MCF 10A (cell line): ENCODE measurements at regions of chr7 and their contacts with region 1.

Region 1: GRCh38 chr7:518630-519483 is 789 bp downstream of the PDGFA start:
- DNase-seq: peak; percentile 83
- H3K4me3 Mint-ChIP-seq: peak overlapping the region; percentile 85
- H3K27ac Mint-ChIP-seq: no peak overlapping the region
- H3K4me1 Mint-ChIP-seq: peaks cover 3% of the 10 kb centered on the region
- H3K27me3 Mint-ChIP-seq: no peaks in the 10 kb centered on the region
- CTCF ChIP-seq: no peak

Region 2: DNA sequence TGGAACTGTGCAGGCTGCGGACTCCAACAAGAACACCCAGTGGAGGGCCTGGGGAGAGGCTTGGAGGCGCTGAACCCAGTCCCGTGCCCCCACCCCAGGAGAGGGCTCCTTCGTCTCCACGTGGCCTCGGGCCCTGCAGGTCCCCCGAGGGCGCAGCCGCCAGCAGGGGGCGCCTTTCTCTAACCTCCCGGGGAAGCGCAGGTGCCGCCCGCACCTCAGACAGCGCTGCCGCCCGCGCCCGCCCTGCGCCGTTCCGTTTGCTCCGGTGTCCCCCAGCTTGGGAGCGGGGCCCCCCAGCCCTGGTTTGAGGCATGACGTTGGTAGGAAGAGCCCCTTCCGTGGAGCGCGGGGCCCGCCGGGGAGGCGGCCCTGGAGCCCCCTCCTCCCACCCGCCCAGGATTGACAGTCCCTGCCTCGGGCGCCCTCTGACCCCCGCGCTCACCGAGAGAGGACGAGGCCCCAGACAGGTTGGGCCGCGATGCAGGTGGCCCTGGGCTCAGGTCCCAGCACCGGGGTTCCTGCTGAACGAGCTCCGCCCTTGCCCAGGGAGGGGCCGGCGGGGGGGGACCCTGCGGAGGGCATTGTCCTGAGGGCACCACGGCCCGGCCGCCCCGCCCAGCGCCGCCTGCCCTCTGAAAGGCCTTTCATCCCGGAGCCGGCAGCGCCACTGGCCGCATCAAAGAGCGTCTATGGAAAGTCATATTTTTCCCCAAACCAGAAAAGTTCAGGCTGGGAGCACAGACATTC is 186.0 kb before region 1 on chr7:
- CTCF ChIA-PET with region 1: no interaction called
- POLR2A ChIA-PET with region 1: interaction called, 4 read pairs
- intact Hi-C with region 1: loop called (anchors 2 kb)
- DNase-seq: peak; percentile 68
- H3K4me3 Mint-ChIP-seq: peak overlapping the region; percentile 33
- H3K27ac Mint-ChIP-seq: no peak overlapping the region
- H3K4me1 Mint-ChIP-seq: no peaks in the 10 kb centered on the region
- H3K27me3 Mint-ChIP-seq: peaks cover 12% of the 10 kb centered on the region
- CTCF ChIP-seq: peak; percentile 89

Region 3: DNA sequence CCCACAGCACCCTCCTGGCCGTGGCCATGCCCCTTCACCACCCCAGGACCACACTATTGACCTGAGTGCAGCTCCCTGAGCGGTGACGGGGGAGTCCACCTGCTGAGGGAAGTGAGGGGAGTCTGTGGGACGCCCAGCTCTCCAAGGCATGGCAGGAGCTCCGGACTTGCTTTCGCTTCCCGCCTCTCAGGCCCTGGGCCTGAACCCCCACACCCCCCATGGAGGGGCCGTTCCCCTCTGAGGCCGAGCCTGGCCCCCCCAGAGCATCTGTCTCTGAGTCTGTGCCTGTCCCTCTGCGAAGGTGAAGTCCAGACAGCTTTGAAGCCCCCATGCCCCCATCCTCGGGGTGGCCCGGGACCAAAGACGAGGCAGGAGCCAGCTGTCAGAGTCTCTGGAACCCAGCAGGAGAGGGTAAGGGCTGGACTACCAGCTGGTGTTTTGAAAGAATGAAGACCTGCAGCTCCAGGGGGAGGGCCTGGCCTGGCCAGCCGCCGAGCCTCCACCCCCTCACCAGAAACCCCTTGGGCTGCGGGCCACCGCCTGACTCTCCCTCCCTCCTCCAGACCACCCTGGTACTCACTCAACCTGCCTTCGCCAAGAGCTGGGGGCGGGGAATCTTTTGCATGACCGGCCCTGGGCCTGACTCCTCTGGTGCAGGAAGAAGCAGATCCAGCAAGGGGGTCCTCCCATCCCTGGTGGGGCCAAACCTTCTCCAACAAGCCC is 113.2 kb before region 1 on chr7:
- CTCF ChIA-PET with region 1: no interaction called
- POLR2A ChIA-PET with region 1: no interaction called
- intact Hi-C with region 1: no loop called
- DNase-seq: no peak
- H3K4me3 Mint-ChIP-seq: no peak overlapping the region
- H3K27ac Mint-ChIP-seq: no peak overlapping the region
- H3K4me1 Mint-ChIP-seq: no peaks in the 10 kb centered on the region
- H3K27me3 Mint-ChIP-seq: peaks cover 70% of the 10 kb centered on the region
- CTCF ChIP-seq: no peak

Region 4: GRCh38 chr7:471866-472639 is 46.8 kb before region 1 on chr7:
- CTCF ChIA-PET with region 1: no interaction called
- POLR2A ChIA-PET with region 1: no interaction called
- intact Hi-C with region 1: no loop called
- DNase-seq: peak; percentile 71
- H3K4me3 Mint-ChIP-seq: no peak overlapping the region
- H3K27ac Mint-ChIP-seq: no peak overlapping the region
- H3K4me1 Mint-ChIP-seq: no peaks in the 10 kb centered on the region
- H3K27me3 Mint-ChIP-seq: no peaks in the 10 kb centered on the region
- CTCF ChIP-seq: no peak

Region 5: DNA sequence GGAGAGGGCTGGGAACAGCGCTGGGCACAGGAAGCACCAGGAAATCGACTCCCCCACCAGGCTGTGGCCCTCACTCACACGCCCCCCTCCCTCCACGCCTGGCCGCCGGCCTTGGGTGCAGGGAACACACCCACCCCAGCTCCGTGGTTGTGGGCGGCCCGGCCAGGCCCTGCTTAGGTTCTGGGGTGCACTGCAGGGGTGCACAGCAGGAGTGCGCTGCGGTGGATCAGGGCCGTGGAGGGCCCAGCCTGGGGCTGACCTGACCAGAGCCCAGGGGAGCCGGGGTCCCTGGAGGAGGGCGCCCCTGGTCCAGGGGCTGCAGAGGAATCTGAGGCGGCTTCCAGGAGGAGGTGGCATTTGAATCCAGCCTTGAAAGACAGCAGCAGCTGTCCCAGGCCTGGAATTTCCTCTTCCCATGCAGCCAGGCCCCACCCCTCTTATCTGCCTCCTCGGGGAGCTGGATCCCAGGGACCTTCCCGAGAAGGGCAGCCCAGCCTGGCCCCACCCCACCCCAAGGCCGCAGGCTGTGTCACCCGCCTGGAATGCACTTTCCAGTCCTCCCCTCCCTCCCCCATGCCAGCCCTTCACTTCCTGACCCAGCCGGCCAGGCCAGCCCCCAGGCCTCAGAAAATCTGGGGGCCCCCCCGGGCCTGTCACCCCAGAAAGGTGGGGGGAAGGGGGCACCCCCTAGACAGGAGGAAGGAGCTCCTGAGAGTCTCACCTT is 19.2 kb after region 1 on chr7:
- CTCF ChIA-PET with region 1: interaction called, 3 read pairs
- POLR2A ChIA-PET with region 1: interaction called, 39 read pairs
- intact Hi-C with region 1: loop called (anchors 2 kb)
- DNase-seq: peak; percentile 91
- H3K4me3 Mint-ChIP-seq: peak overlapping the region; percentile 66
- H3K27ac Mint-ChIP-seq: peak overlapping the region; percentile 85
- H3K4me1 Mint-ChIP-seq: peaks cover 36% of the 10 kb centered on the region
- H3K27me3 Mint-ChIP-seq: no peaks in the 10 kb centered on the region
- CTCF ChIP-seq: no peak

Region 6: DNA sequence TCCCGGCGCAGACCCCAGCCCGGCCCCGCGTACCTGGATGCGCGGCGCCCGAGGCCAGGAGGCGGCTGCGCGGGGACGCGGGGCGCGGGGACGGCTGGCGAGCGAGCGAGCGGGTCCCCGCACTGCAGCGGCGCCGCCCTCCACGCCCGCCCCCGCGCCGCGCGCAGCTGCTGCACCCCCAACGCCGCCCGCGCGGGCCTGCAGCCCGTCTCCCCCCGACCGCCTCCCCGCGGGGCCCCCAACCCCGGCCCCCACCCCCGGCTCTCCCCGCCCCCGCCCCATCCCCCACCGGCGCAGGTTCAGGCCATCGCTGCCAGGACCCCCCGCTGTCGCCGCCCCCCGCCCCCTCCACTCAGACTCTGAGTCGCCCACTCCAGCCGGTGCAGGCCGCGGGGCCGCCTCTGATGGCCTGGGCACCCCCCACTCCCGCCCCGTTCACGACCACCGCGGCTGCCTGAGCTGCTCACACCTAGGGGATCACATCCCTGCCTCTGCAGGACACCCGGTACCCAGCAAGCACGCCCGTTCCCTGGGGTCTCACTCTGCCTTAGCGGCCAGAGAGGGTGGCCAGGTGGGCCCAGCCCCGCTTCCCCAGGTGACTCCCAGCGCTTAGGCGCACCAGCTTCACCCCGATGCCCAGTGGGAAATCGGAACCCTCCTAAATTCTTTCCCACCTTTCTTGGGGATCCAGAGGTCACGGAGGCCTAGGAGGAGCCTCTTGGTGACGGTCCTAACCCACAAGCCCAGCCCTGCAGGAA is 193.7 kb after region 1 on chr7:
- CTCF ChIA-PET with region 1: no interaction called
- POLR2A ChIA-PET with region 1: interaction called, 3 read pairs
- intact Hi-C with region 1: loop called (anchors 2 kb)
- DNase-seq: no peak
- H3K4me3 Mint-ChIP-seq: no peak overlapping the region
- H3K27ac Mint-ChIP-seq: no peak overlapping the region
- H3K4me1 Mint-ChIP-seq: peaks cover 7% of the 10 kb centered on the region
- H3K27me3 Mint-ChIP-seq: no peaks in the 10 kb centered on the region
- CTCF ChIP-seq: no peak

Region 7: GRCh38 chr7:726084-726853 is 207.4 kb after region 1 on chr7 and contains the start of gene DNAAF5:
- CTCF ChIA-PET with region 1: interaction called, 5 read pairs
- POLR2A ChIA-PET with region 1: interaction called, 6 read pairs
- intact Hi-C with region 1: loop called (anchors 5 kb)
- DNase-seq: peak; percentile 85
- H3K4me3 Mint-ChIP-seq: peak within 1 kb of the TSS; percentile 78
- H3K27ac Mint-ChIP-seq: peak within 1 kb of the TSS; percentile 75
- H3K4me1 Mint-ChIP-seq: peaks cover 31% of the 10 kb centered on the region
- H3K27me3 Mint-ChIP-seq: no peaks in the 10 kb centered on the region
- CTCF ChIP-seq: no peak
- total RNA-seq, gene DNAAF5: 35.6 and 37.6 TPM in 2 replicates